Activated naive CD4-positive, alpha-beta T cell treated with anti-CD3 and anti-CD28 coated beads for 36 hours (primary cell): ENCODE measurements at regions of chr11 and their contacts with region 1.

Region 1: GRCh38 chr11:106087815-106088435 is 10.5 kb downstream of the AASDHPPT start:
- DNase-seq: peak; percentile 69
- H3K4me3 Mint-ChIP-seq: no peak overlapping the region
- H3K27ac Mint-ChIP-seq: no peak overlapping the region
- H3K4me1 Mint-ChIP-seq: peaks cover 58% of the 10 kb centered on the region
- H3K27me3 Mint-ChIP-seq: no peaks in the 10 kb centered on the region

Region 2: GRCh38 chr11:106021967-106022794 is 65.7 kb before region 1 on chr11 and contains the start of gene MSANTD4:
- CTCF ChIA-PET with region 1: no interaction called
- intact Hi-C with region 1: loop called (anchors 1 kb)
- DNase-seq: peak; percentile 99
- H3K4me3 Mint-ChIP-seq: peak within 1 kb of the TSS; percentile 93
- H3K27ac Mint-ChIP-seq: peak within 1 kb of the TSS; percentile 85
- H3K4me1 Mint-ChIP-seq: peaks cover 40% of the 10 kb centered on the region
- H3K27me3 Mint-ChIP-seq: peaks cover 3% of the 10 kb centered on the region
- total RNA-seq, gene MSANTD4: 11.5 to 12.0 TPM

Region 3: DNA sequence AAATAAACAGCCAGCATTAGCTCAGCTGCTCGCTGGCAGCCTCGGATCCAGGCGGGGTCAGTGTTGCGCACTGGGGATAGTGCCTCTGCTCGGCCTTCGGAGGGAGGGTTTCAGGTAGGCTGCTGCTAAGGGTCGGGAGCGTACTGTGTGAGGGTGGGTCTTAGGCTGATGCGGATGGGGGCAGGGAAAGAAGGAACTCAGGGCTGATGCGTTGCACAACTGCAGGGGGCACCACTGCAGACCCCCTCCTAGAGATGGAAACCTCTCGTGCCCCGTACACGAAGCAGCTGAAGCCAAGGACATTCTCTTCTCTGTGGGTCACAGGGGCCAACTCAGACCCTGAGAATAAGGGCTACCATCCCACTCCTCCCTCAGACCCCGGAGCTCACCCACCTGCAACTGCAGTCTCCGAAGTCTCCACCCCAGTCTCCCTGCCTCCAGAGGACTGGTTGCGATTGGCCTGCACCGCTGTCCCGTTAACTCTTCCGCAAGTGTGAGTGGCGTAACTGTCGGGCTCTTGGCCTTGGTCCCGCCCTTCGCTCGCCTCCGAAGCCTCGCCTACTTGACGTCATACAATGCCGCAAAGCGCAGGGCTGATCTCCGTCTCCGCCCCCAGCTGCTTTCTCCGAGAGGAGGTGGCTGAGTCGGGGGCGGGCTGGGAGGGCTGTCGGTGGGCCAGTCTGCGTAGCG is 10.9 kb before region 1 on chr11 and contains the start of gene KBTBD3:
- CTCF ChIA-PET with region 1: interaction called, 14 read pairs
- intact Hi-C with region 1: loop called (anchors 1 kb)
- DNase-seq: peak; percentile 98
- H3K4me3 Mint-ChIP-seq: peak within 1 kb of the TSS; percentile 91
- H3K27ac Mint-ChIP-seq: peak within 1 kb of the TSS; percentile 93
- H3K4me1 Mint-ChIP-seq: peaks cover 47% of the 10 kb centered on the region
- H3K27me3 Mint-ChIP-seq: no peaks in the 10 kb centered on the region
- total RNA-seq, gene KBTBD3: 6.6 to 7.9 TPM

Region 4: GRCh38 chr11:107017433-107018227 is 929.7 kb after region 1 on chr11:
- CTCF ChIA-PET with region 1: no interaction called
- intact Hi-C with region 1: loop called (anchors 5 kb)
- DNase-seq: peak; percentile 16
- H3K4me3 Mint-ChIP-seq: peak overlapping the region; percentile 24
- H3K27ac Mint-ChIP-seq: no peak overlapping the region
- H3K4me1 Mint-ChIP-seq: peaks cover 4% of the 10 kb centered on the region
- H3K27me3 Mint-ChIP-seq: peaks cover 47% of the 10 kb centered on the region

Region 5: GRCh38 chr11:107689317-107690202 is 1601.6 kb after region 1 on chr11:
- CTCF ChIA-PET with region 1: no interaction called
- intact Hi-C with region 1: loop called (anchors 5 kb)
- DNase-seq: peak; percentile 81
- H3K4me3 Mint-ChIP-seq: no peak overlapping the region
- H3K27ac Mint-ChIP-seq: no peak overlapping the region
- H3K4me1 Mint-ChIP-seq: no peaks in the 10 kb centered on the region
- H3K27me3 Mint-ChIP-seq: peaks cover 13% of the 10 kb centered on the region